Activated CD4-positive, alpha-beta T cell treated with anti-CD3 and anti-CD28 coated beads, Interleukin-2, amount 10 ng/mL, durations not matched to agents 24 days and 14 days (primary cell): ENCODE measurements at regions of chr10 and their contacts with region 1.

Region 1: GRCh38 chr10:133357285-133358151 is at the start of gene FUOM:
- DNase-seq: peak; percentile 91
- H3K4me3 Mint-ChIP-seq: peak within 1 kb of the TSS; percentile 85
- H3K27ac Mint-ChIP-seq: peak within 1 kb of the TSS; percentile 74
- H3K4me1 Mint-ChIP-seq: peaks cover 2% of the 10 kb centered on the region
- H3K27me3 Mint-ChIP-seq: no peaks in the 10 kb centered on the region
- total RNA-seq, gene FUOM: 43.6 and 46.6 TPM in 2 replicates

Region 2: DNA sequence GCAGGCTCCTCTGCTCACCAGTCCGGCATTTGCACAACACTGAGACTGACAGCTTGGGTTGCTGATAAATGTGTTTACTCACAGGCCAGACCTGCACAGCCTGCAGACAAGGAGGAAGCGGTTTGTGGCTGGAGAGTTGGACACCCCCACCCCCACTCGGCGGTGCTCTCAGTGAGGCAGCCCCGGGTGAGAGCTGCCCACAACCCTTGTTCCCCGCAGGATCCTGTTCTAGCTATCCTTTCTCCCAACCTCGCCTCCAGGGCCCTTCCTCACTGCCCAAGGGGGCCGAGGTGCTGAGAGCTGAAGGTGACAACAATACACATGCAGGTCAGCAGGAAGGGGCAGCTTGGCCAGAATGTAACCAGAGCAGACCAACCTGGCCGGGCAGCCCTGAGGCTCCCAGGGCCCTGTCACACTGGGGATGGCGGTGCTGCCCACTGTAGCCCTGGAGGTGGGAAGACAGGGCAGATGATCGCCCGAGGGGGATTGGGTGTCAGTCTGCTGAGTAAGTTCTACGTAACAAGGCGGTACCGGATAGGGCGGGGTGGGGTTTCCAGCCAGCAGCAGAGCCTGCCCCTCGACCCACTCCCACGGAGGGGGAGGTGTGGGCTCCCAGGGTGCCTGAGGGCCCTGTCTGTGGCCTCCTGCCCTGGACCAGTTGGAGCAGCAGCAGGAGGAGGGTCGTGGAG is 78.8 kb before region 1 on chr10:
- intact Hi-C with region 1: loop called (anchors 5 kb)
- DNase-seq: peak; percentile 87
- H3K4me3 Mint-ChIP-seq: peak overlapping the region; percentile 79
- H3K27ac Mint-ChIP-seq: peak overlapping the region; percentile 88
- H3K4me1 Mint-ChIP-seq: peaks cover 28% of the 10 kb centered on the region
- H3K27me3 Mint-ChIP-seq: no peaks in the 10 kb centered on the region

Region 3: DNA sequence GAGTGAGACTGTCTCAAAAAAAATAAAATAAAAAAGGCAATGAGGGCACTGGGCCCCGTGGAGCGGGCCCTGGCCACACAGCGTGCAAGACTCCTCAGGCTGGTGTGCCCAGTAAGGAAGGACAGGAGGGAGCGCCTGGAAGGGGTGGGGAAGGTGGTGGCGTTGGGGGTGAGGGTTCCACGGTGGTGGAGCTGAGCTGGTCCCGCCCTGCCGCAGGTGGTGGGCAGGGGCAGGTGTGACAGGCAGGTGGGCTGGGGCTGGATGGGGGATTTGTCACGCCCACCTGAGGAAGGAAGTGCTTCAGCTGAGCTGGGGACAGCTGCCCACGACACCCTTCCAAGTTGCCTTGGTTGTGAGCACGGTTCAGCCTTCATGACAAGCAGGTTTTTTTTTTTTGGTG is 11.1 kb before region 1 on chr10:
- intact Hi-C with region 1: no loop called
- DNase-seq: no peak
- H3K4me3 Mint-ChIP-seq: no peak overlapping the region
- H3K27ac Mint-ChIP-seq: no peak overlapping the region
- H3K4me1 Mint-ChIP-seq: peaks cover 3% of the 10 kb centered on the region
- H3K27me3 Mint-ChIP-seq: peaks cover 18% of the 10 kb centered on the region

Region 4: GRCh38 chr10:133373104-133373624 is 15.6 kb after region 1 on chr10 and contains the start of gene ECHS1:
- intact Hi-C with region 1: loop called (anchors 1 kb)
- DNase-seq: peak; percentile 99
- H3K4me3 Mint-ChIP-seq: peak within 1 kb of the TSS; percentile 94
- H3K27ac Mint-ChIP-seq: peak within 1 kb of the TSS; percentile 86
- H3K4me1 Mint-ChIP-seq: peaks cover 11% of the 10 kb centered on the region
- H3K27me3 Mint-ChIP-seq: peaks cover 3% of the 10 kb centered on the region
- total RNA-seq, gene ECHS1: 64.3 and 66.3 TPM in 2 replicates

Region 5: GRCh38 chr10:133378251-133379096 is 21.0 kb after region 1 on chr10:
- intact Hi-C with region 1: loop called (anchors 1 kb)
- DNase-seq: peak; percentile 90
- H3K4me3 Mint-ChIP-seq: peak overlapping the region; percentile 80
- H3K27ac Mint-ChIP-seq: peak overlapping the region; percentile 51
- H3K4me1 Mint-ChIP-seq: peaks cover 7% of the 10 kb centered on the region
- H3K27me3 Mint-ChIP-seq: peaks cover 3% of the 10 kb centered on the region

Region 6: GRCh38 chr10:133394064-133394663 is 36.6 kb after region 1 on chr10 and contains the start of gene MTG1:
- intact Hi-C with region 1: loop called (anchors 1 kb)
- DNase-seq: peak; percentile 99
- H3K4me3 Mint-ChIP-seq: peak within 1 kb of the TSS; percentile 97
- H3K27ac Mint-ChIP-seq: peak within 1 kb of the TSS; percentile 98
- H3K4me1 Mint-ChIP-seq: peaks cover 37% of the 10 kb centered on the region
- H3K27me3 Mint-ChIP-seq: no peaks in the 10 kb centered on the region
- total RNA-seq, gene MTG1: 66.8 and 68.1 TPM in 2 replicates

Region 7: GRCh38 chr10:133415752-133416151 is 58.2 kb after region 1 on chr10:
- intact Hi-C with region 1: no loop called
- DNase-seq: no peak
- H3K4me3 Mint-ChIP-seq: no peak overlapping the region
- H3K27ac Mint-ChIP-seq: no peak overlapping the region
- H3K4me1 Mint-ChIP-seq: no peaks in the 10 kb centered on the region
- H3K27me3 Mint-ChIP-seq: no peaks in the 10 kb centered on the region